B cell (primary cell): ENCODE measurements at regions of chr1 and their contacts with region 1.

Region 1: GRCh38 chr1:233326811-233327650 is 493 bp upstream of the MAP3K21 start:
- DNase-seq: peak; percentile 97
- ATAC-seq: peak; percentile 95
- H3K4me3 ChIP-seq: peak overlapping the region in 4 of 5 experiments; percentile 32 to 62 (median 51)
- H3K4me3 Mint-ChIP-seq: peak overlapping the region; percentile 90
- H3K27ac ChIP-seq: no peak overlapping the region
- H3K27ac Mint-ChIP-seq: peak overlapping the region; percentile 79
- H3K4me1 ChIP-seq: peaks cover 11 to 12% of the 10 kb centered on the region in 2 donors
- H3K4me1 Mint-ChIP-seq: peaks cover 16% of the 10 kb centered on the region
- H3K27me3 ChIP-seq: peaks cover 0 to 7% (median 2%) of the 10 kb centered on the region in 4 experiments
- H3K27me3 Mint-ChIP-seq: peaks cover 16% of the 10 kb centered on the region
- CTCF ChIP-seq: no peak

Region 2: DNA sequence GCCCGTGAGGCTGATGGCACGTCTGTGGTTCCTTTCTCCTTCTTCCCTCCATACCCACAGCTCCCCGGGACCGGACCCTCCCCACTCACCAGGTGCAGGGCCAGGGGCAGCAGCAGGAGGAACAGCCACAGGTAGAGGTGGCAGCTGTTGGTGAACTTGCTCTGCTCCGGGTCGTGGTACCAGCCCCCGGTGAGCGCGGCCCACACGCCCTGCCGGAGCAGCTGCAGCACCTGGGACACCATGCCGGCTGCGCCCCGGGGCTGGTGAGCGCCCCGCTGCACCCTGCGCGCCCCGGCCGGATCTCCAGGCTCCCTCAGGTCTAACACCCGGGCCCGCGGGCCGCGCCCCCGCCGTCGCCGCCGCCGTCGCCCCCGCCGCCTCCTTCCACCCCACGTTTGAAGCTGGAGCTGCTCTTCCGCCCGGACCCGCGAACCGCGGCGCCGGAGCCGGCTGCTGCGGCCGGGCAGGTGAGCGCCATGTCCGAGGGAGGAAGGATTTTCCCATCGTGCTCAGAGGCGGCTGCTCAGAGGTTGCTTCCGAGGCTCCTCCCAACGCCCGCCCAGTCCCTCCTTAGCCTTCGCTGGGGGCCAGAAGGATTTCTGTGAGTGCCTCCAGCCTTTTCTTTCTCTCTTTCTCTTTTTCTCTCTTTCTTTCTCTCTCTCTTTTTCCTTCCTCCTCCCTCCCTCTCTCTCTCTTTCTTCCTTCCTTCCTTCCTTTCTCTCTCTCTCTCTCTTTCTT is 31.6 kb before region 1 on chr1 and contains the start of gene PCNX2:
- CTCF ChIA-PET with region 1: no interaction called
- POLR2A ChIA-PET with region 1: no interaction called
- intact Hi-C with region 1: loop called (anchors 1 kb)
- DNase-seq: peak; percentile 62
- ATAC-seq: peak; percentile 82
- H3K4me3 ChIP-seq: peak within 1 kb of the TSS in 4 of 5 experiments; percentile 47 to 68 (median 62)
- H3K4me3 Mint-ChIP-seq: peak within 1 kb of the TSS; percentile 83
- H3K27ac ChIP-seq: peak within 1 kb of the TSS in 1 of 2 donors; percentile 47
- H3K27ac Mint-ChIP-seq: peak within 1 kb of the TSS; percentile 77
- H3K4me1 ChIP-seq: peaks cover 11 to 13% of the 10 kb centered on the region in 2 donors
- H3K4me1 Mint-ChIP-seq: peaks cover 14% of the 10 kb centered on the region
- H3K27me3 ChIP-seq: peaks cover 0 to 2% (median 0%) of the 10 kb centered on the region in 4 experiments
- H3K27me3 Mint-ChIP-seq: no peaks in the 10 kb centered on the region
- CTCF ChIP-seq: peak; percentile 23
- total RNA-seq, gene PCNX2: 34.7 and 35.8 TPM in 2 replicates

Region 3: GRCh38 chr1:233412812-233413211 is 85.8 kb after region 1 on chr1:
- CTCF ChIA-PET with region 1: no interaction called
- POLR2A ChIA-PET with region 1: no interaction called
- intact Hi-C with region 1: no loop called
- DNase-seq: no peak
- ATAC-seq: no peak
- H3K4me3 ChIP-seq: no peak overlapping the region
- H3K4me3 Mint-ChIP-seq: no peak overlapping the region
- H3K27ac ChIP-seq: no peak overlapping the region
- H3K27ac Mint-ChIP-seq: no peak overlapping the region
- H3K4me1 ChIP-seq: no peaks in the 10 kb centered on the region
- H3K4me1 Mint-ChIP-seq: no peaks in the 10 kb centered on the region
- H3K27me3 ChIP-seq: no peaks in the 10 kb centered on the region
- H3K27me3 Mint-ChIP-seq: peaks cover 20% of the 10 kb centered on the region
- CTCF ChIP-seq: no peak